ENCODE measurements at regions of chr15 and their contacts with region 1.

Region 1: GRCh38 chr15:75307778-75308391 is 25.2 kb downstream of the GOLGA6D start:
- DNase-seq: peak; percentile 37
- H3K4me3 ChIP-seq: no peak overlapping the region
- H3K27ac ChIP-seq: no peak overlapping the region
- H3K4me1 ChIP-seq: no peaks in the 10 kb centered on the region
- CTCF ChIP-seq: peak; percentile 70

Region 2: DNA sequence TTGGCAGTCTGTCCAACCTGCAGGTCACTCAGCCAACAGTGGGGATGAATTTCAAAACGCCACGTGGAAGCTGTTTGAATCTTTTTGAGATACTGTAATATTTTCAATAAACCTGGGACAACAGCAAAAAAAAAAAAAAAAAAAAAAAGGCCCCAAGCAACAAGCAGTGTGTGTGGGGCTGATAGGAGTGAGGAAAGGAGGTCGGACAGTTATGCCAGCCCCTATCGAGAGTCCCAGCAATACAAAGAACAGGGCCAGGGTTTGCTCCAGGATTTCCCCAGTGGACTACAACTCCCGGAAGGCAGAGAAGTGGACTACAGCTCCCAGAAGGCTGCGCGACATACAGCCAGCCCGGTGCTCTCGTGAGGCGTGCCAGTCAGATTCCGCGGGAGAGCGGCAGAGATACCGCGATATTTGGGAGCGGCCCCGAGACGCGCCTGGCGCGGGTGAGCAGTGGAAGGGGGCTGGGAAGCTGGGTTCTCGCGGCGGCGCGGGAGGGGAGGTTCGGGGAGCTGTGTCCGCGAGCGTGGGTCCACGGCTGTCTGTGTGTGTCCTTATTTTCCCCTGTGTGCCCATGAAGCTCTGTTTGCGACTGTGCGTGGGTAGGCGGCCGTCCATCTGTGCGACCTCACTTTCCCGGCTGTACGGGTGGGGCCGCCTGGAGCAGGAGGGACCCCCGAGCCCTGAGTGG is 284.6 kb before region 1 on chr15 and contains the start of gene PPCDC:
- CTCF ChIA-PET with region 1: no interaction called
- POLR2A ChIA-PET with region 1: no interaction called
- intact Hi-C with region 1: loop called (anchors 10 kb)
- DNase-seq: peak; percentile 97
- H3K4me3 ChIP-seq: peak within 1 kb of the TSS; percentile 90
- H3K27ac ChIP-seq: peak within 1 kb of the TSS; percentile 76
- H3K4me1 ChIP-seq: peaks cover 72% of the 10 kb centered on the region
- CTCF ChIP-seq: no peak
- total RNA-seq, gene PPCDC: 32.0 and 44.3 TPM in 2 replicates

Region 3: DNA sequence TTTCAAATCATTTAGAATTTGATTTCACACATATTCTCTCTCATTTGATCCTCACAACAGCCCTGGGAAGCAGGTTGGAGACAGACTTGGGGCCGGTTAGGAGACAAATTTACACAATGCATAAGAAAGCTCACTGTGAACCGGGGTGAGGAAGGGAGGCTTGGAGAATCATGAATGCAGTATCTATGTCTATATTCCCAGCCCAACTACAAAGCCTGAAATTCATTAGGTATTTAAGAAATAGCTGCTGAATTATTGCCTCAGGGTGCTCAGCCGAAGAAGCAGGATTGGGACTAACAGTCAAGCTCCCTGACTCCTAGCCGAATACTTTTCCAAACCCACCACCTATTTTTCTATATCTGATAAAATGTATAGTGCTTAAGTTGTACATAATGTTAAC is 58.2 kb before region 1 on chr15:
- CTCF ChIA-PET with region 1: no interaction called
- POLR2A ChIA-PET with region 1: no interaction called
- intact Hi-C with region 1: loop called (anchors 10 kb)
- DNase-seq: no peak
- H3K4me3 ChIP-seq: no peak overlapping the region
- H3K27ac ChIP-seq: no peak overlapping the region
- H3K4me1 ChIP-seq: no peaks in the 10 kb centered on the region
- CTCF ChIP-seq: no peak

Region 4: GRCh38 chr15:75542386-75542797 is 234.5 kb after region 1 on chr15:
- CTCF ChIA-PET with region 1: no interaction called
- POLR2A ChIA-PET with region 1: no interaction called
- intact Hi-C with region 1: no loop called
- DNase-seq: no peak
- H3K4me3 ChIP-seq: no peak overlapping the region
- H3K27ac ChIP-seq: no peak overlapping the region
- H3K4me1 ChIP-seq: no peaks in the 10 kb centered on the region
- CTCF ChIP-seq: no peak